AG04449 (cell line): ENCODE measurements at regions of chr11 and their contacts with region 1.

Region 1: DNA sequence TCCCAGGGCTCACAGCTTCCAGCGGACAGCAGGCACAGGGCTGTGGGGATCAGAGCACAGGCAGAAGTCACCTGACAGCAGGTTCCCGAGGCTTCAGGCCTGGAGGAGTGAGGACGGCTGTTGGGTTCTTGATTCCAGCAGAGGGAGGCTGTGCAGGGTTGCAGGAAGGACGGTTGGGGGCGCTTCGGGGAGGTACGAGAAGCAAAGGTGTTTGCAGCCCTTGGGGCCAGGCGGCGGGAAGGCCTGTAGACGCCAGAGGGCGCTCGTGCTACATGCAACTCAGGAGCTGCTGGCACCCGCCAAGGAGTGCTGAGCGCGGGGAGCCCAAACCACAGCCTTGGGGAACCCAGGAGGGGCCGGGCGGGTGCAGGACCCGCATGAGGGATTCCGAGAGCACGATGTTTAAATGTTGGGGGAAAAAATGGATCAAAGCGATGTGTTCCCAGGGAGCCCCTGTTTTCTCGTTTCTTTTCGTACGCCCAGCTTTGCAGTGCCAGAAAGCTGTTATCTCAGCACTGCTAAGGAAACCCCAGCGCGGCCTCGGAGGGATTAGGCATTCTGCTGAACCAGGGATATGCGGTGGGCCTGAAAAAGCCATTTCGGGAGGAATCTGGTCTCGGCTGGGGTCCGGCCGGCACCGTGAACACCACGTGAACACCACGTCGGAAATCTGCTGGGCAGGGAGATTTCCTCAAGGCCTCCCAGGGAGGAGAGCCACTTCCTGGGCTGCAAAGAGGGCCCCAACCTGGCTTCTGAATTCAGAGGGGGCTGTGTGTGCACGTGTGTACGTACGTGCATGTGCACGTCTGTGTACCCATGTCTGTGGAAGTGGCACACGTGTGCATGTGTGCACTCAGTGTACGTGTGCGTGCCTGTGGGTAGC is 88.1 kb downstream of the KCNQ1 start:
- DNase-seq: peak; percentile 28
- H3K4me3 ChIP-seq: peak overlapping the region; percentile 23
- CTCF ChIP-seq: peak; percentile 95

Region 2: DNA sequence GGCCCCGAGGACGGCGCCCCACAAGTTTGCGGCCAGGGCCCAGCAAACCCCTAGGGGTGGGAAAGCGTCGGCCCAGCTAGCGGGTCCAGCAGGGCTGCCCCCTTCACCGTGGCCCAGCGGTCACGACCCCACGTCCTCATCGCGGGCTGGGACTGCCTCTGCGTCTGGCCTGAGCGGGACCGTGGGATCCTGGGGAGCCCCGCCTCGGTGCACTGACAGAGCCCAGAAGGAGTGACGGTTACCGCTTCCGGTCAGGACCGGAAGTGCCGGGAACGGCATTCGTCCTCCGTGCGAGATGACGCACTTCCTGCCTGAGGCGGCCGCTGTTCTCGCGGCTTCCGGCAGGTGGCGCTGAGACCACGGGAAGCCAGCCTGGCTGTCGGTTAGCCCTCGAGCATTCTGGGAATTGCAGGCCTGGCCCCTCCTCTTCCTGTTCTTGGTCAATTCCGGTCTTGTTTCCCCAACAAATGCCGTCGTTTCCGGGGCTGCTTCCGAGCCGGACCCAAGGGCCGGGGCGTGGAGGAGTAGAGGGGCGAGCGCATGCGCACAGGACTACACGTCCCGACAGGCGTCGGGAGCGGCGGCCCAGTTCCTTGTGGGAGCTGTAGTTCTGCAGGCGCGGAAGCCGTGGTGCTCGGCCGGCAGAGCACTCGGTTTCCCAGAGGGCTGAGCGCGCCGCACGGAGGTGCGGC is 132.7 kb before region 1 on chr11 and contains the start of gene TSSC4:
- CTCF ChIA-PET with region 1: interaction called, 10 read pairs
- POLR2A ChIA-PET with region 1: interaction called, 5 read pairs
- DNase-seq: peak; percentile 99
- H3K4me3 ChIP-seq: peak within 1 kb of the TSS; percentile 99
- CTCF ChIP-seq: peak; percentile 99

Region 3: DNA sequence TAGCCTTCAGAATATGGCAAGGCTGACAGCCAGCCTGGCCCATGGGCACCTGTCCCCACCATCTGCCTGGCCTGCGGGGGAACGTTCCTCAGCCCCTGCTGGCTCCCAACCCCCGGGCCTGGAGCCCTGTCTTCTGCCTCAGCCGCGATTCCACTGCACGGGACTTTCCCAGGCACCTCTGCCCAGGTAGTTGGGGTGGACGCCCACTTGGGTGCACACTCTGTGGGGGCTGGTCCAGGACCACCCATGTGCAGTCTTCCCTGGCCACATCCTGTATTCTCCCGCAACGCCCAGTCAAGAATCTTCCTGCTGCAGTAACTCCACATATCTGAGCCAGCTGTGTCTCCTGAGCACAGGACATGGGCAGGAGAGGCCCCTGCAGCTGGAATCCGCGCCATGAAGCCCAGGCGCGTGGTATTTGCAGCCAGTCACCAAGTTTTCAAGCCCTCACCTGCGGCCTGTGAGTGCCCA is 10.2 kb before region 1 on chr11:
- CTCF ChIA-PET with region 1: interaction called, 23 read pairs
- POLR2A ChIA-PET with region 1: no interaction called
- DNase-seq: no peak
- H3K4me3 ChIP-seq: no peak overlapping the region
- CTCF ChIP-seq: no peak

Region 4: GRCh38 chr11:2878782-2879181 is 345.8 kb after region 1 on chr11:
- CTCF ChIA-PET with region 1: interaction called, 1,022 read pairs
- POLR2A ChIA-PET with region 1: no interaction called
- DNase-seq: no peak
- H3K4me3 ChIP-seq: no peak overlapping the region
- CTCF ChIP-seq: no peak

Region 5: DNA sequence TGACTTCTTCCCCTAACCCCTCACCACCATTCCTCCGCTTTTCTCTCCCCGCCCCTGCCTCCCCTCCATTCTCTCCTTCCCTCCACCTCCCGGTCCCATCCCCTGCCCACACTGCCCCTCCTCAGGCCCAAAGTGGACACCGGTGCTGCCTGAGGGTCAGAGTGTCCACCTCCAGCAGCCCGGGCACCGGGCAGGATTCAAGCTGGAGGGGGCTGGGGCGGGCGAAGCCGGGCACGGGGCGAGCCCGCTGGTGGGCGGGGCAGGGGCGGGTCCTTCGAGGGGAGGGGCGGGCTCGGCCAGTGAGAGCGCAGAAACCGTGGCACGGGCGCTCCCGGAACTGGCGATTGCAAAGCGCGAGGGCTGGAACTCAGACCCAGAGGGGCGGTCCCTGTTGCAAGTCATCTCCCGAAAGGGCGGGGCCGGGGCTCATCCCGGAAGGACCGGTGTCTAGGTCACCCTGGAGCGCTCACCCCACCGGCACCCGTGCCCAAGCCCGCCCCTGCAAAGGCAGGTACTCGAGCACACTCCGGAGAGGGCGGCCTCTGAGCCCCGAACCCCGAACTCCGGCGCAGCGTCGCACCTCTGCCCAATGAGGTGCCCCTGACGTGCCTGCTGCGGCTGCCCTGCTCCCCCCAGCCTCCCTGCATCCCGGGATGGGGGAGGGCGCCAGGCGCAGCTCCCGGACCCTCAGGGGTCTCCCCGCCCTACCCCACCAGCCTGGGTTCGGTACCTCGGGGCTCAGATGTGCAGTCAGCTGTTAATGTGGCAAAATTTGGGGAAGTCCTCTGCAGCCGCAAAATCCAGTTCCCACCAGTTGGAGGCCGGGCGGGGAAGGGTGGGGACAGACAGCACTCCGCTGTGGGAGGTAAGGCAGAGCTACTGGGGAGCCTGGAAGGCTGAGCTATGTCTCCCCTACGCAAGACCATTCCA is 369.2 kb after region 1 on chr11:
- CTCF ChIA-PET with region 1: interaction called, 17 read pairs
- POLR2A ChIA-PET with region 1: interaction called, 3 read pairs
- DNase-seq: peak; percentile 42
- H3K4me3 ChIP-seq: peak overlapping the region; percentile 75
- CTCF ChIP-seq: no peak

Region 6: DNA sequence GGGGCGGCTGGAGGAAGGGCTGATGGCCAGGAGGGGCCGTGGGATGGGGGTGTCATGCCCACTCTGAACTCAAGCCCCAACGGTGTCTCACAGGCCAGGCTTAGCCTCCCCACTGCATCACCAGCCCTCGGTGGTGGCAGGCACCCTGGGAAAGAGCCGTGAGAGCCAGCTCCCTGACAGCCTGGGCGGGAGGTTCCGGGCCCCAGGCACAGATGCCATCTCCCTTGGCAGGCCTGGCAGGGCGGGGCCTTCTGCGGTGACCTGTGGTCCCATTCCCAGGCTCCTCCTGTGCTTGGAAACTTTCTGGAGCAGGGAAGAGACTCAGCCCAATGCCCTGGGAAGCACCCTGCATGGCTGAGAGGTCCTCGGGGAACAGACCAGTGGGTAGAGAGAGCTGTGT is 391.4 kb after region 1 on chr11:
- CTCF ChIA-PET with region 1: interaction called, 14 read pairs
- POLR2A ChIA-PET with region 1: no interaction called
- DNase-seq: no peak
- H3K4me3 ChIP-seq: no peak overlapping the region
- CTCF ChIP-seq: no peak

Region 7: DNA sequence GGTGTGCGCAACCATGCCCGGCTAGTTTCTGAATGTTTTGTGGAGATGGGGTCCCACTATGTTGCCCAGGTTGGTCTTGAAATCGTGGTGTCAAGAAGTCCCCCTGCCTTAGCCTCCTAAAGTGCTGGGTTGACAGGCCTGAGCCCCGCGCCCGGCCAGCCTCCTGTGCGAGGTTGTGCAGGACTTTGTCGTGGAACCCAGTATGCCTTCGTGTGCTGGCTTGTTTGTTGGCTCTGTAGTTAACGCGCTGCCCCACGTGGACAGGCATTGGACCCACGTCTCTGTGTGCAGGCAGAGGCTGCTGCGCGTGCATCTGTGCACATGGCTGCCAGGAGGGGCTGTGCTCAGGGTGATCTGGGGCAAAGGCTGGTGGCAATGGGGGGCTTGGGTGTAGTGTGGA is 879.9 kb after region 1 on chr11:
- CTCF ChIA-PET with region 1: interaction called, 12 read pairs
- POLR2A ChIA-PET with region 1: interaction called, 3 read pairs
- DNase-seq: no peak
- H3K4me3 ChIP-seq: no peak overlapping the region
- CTCF ChIP-seq: no peak